ENCODE measurements at regions of chr4 and their contacts with region 1.

Region 1: DNA sequence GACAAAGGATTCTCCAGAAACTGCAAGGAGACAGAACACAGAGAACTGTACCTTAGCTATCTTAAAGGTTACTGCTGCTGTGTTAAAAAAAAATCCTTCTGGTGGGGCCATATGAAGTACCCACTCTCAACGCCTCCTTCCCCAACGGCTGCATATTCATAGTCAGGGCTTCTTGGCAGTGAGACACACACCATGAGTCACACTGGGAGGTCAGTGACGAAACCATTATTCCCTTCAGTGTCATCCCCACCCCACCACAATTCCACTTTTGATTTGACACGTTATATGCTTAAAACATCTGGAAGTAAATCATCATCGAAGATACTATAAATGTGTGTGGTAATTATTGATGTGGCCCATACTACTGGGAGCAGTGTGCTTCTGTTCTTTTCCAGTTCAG is 271.5 kb downstream of the LDB2 start:
- DNase-seq: no peak
- H3K4me3 ChIP-seq: no peak overlapping the region
- H3K27ac ChIP-seq: no peak overlapping the region
- H3K4me1 ChIP-seq: no peaks in the 10 kb centered on the region
- H3K27me3 ChIP-seq: no peaks in the 10 kb centered on the region
- CTCF ChIP-seq: no peak

Region 2: DNA sequence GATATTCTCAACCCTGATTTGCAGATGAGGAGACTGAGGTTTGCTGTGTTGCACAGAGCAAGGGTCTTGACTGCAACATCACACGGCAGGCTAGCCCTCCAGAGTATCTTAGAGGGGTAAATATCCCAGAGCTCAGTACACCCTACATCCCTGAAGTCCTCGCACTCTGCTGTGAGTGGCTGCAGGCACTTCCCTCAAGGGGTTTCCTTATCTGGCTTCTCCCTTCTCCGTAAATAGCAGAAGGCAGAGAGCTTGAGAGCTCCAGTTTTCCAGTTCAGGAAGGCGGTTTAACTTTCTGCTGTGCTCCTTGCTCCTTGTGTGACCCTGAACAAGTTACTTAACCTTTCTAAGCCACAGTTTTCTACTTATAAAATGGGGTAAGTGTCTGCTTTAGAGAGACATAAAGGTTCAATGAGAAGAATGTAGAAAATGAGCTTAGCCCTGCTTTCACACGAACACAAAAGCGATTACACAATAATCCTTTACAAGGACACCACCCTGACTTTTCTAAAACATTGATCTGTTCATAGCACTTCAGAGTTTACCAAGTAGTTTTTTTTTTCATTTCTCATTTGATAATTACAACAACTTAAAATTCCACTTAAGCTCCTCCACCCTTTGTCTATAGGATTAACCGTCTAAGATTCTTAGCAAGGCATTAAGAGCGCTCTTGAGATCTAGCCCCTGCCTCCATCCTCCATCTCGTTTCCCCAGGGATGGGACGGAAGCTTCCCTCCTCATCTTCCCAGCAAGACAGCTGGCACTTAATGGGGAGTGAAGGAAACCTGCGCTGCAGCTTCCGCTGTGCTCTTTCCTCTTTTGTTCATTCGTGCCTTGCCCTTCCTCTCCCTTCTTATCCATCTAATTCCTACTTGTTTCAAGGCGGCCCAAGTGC is 469.1 kb before region 1 on chr4:
- dilution Hi-C with region 1: no loop called
- DNase-seq: no peak
- H3K4me3 ChIP-seq: no peak overlapping the region
- H3K27ac ChIP-seq: no peak overlapping the region
- H3K4me1 ChIP-seq: no peaks in the 10 kb centered on the region
- H3K27me3 ChIP-seq: no peaks in the 10 kb centered on the region
- CTCF ChIP-seq: no peak

Region 3: DNA sequence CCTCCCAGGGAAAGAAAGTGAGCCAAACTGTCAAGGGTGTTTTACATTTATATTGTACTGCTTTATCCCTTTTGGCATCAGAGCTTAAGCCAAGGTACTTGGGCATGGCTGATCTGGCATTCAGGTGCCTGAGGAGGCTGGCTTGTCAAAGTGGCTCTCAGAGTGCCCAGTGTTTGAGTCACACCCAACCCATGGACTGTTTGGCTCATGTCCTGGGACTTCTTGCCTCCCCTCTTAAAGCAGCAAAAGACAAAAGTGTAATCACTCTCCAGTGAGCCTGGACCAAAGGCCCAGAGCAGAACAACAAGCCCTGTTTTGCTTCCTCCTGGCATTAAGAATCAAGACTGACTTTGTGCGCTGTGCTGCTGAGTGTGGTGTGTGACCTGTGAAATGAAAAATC is 89.0 kb before region 1 on chr4:
- dilution Hi-C with region 1: loop called (anchors 5 kb)
- DNase-seq: no peak
- H3K4me3 ChIP-seq: no peak overlapping the region
- H3K27ac ChIP-seq: no peak overlapping the region
- H3K4me1 ChIP-seq: no peaks in the 10 kb centered on the region
- H3K27me3 ChIP-seq: no peaks in the 10 kb centered on the region
- CTCF ChIP-seq: no peak

Region 4: DNA sequence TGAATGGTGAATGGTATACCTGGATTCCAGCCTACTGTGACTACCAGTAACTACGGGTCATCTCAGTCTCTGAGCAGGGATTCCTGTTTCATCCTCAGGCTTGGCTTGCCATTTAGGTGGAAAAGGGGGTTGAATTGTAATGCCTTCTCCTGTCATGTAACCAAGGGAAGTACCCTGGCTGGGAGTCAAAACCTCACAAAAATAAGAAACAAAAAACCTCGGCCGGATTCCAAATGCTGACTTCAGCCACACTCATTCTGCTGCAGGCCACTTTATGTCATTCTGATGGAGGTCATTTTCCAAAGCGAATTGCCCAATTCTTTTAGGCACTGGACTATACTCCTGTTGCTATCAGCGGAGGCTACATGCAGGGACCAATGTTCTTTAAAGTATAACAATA is 53.2 kb before region 1 on chr4:
- dilution Hi-C with region 1: no loop called
- DNase-seq: no peak
- H3K4me3 ChIP-seq: no peak overlapping the region
- H3K27ac ChIP-seq: no peak overlapping the region
- H3K4me1 ChIP-seq: no peaks in the 10 kb centered on the region
- H3K27me3 ChIP-seq: no peaks in the 10 kb centered on the region
- CTCF ChIP-seq: no peak

Region 5: GRCh38 chr4:16705341-16705740 is 78.4 kb after region 1 on chr4:
- dilution Hi-C with region 1: no loop called
- DNase-seq: no peak
- H3K4me3 ChIP-seq: no peak overlapping the region
- H3K27ac ChIP-seq: no peak overlapping the region
- H3K4me1 ChIP-seq: no peaks in the 10 kb centered on the region
- H3K27me3 ChIP-seq: no peaks in the 10 kb centered on the region
- CTCF ChIP-seq: no peak